Breast epithelium (tissue), 4 donors: ENCODE measurements at regions of chr17 and their contacts with region 1.

Region 1: GRCh38 chr17:45021607-45022287 is 29.7 kb downstream of the DCAKD start:
- DNase-seq: peak; percentile 46 to 72
- H3K4me3 ChIP-seq: peak overlapping the region; percentile 28 to 60 (median 45)
- H3K27ac ChIP-seq: peak overlapping the region; percentile 78 to 87
- H3K4me1 ChIP-seq: peaks cover 7 to 13% of the 10 kb centered on the region in 2 donors
- H3K27me3 ChIP-seq: no peaks in the 10 kb centered on the region
- CTCF ChIP-seq: peak in 2 of 3 donors; percentile 53 to 94
- POLR2A ChIP-seq: no peak

Region 2: GRCh38 chr17:44919885-44920564 is 101.7 kb before region 1 on chr17:
- intact Hi-C with region 1: loop called (anchors 5 kb)
- DNase-seq: peak; percentile 81 to 82
- H3K4me3 ChIP-seq: no peak overlapping the region
- H3K27ac ChIP-seq: peak overlapping the region; percentile 22 to 30
- H3K4me1 ChIP-seq: peaks cover 0 to 10% of the 10 kb centered on the region in 2 donors
- H3K27me3 ChIP-seq: no peaks in the 10 kb centered on the region
- CTCF ChIP-seq: peak; percentile 52 to 95 (median 84)
- POLR2A ChIP-seq: no peak

Region 3: GRCh38 chr17:45108595-45109521 is 87.1 kb after region 1 on chr17:
- intact Hi-C with region 1: loop called (anchors 10 kb)
- DNase-seq: no peak
- H3K4me3 ChIP-seq: no peak overlapping the region
- H3K27ac ChIP-seq: peak overlapping the region; percentile 3 to 22
- H3K4me1 ChIP-seq: peaks cover 0 to 9% of the 10 kb centered on the region in 2 donors
- H3K27me3 ChIP-seq: no peaks in the 10 kb centered on the region
- CTCF ChIP-seq: no peak
- POLR2A ChIP-seq: no peak

Region 4: GRCh38 chr17:45161019-45161825 is 139.5 kb after region 1 on chr17:
- intact Hi-C with region 1: no loop called
- DNase-seq: peak; percentile 98 to 99
- H3K4me3 ChIP-seq: peak overlapping the region; percentile 95 to 100 (median 99)
- H3K27ac ChIP-seq: peak overlapping the region; percentile 100
- H3K4me1 ChIP-seq: peaks cover 3 to 21% of the 10 kb centered on the region in 2 donors
- H3K27me3 ChIP-seq: no peaks in the 10 kb centered on the region
- CTCF ChIP-seq: peak in 1 of 3 donors; percentile 13
- POLR2A ChIP-seq: peak; percentile 97